ENCODE measurements at regions of chr19 and their contacts with region 1.

Region 1: GRCh38 chr19:19591133-19591825 is 27.2 kb downstream of the PBX4 start:
- DNase-seq: peak; percentile 67
- ATAC-seq: peak; percentile 62
- H3K4me3 Mint-ChIP-seq: peak overlapping the region; percentile 52
- H3K27ac Mint-ChIP-seq: peak overlapping the region; percentile 79
- H3K4me1 Mint-ChIP-seq: peaks cover 74% of the 10 kb centered on the region
- H3K27me3 Mint-ChIP-seq: no peaks in the 10 kb centered on the region

Region 2: DNA sequence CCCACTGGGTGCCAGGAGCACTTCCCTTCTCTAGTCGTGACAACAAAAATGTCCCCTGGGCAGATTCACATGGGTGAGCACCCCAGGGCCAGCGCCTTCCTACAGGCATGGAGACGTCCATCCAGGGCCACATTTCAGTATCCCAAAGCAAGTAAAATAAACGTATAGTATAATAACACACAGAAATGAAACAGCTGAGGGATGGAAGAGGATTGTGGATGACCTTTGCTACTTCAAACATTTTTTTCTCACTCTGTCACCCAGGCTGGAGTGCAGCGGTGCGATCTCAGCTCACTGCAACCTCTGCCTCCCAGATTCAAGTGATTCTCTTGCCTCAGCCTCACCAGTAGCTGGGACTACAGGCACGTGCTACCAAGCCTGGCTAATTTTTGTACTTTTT is 25.0 kb before region 1 on chr19:
- CTCF ChIA-PET with region 1: no interaction called
- POLR2A ChIA-PET with region 1: no interaction called
- DNase-seq: no peak
- ATAC-seq: no peak
- H3K4me3 Mint-ChIP-seq: no peak overlapping the region
- H3K27ac Mint-ChIP-seq: no peak overlapping the region
- H3K4me1 Mint-ChIP-seq: peaks cover 10% of the 10 kb centered on the region
- H3K27me3 Mint-ChIP-seq: no peaks in the 10 kb centered on the region

Region 3: DNA sequence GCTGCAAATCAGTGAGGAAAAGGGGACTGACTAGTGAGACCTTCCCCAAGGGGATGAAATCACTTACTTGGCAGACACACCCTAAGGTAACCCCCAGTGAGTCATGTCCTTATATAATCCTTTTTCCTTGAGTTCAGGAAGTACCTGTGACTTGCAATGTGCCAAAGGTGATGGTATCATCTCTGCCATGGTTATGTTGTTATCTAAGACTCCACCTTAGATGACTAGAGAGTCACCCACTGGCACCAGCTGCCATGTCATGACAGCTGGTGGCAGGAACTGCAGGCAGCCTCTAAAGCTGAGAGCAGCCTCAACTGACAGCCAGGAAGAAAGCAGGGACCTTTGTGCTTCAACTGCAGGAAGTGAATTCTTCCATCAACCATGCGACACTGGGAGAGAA is 14.7 kb after region 1 on chr19:
- CTCF ChIA-PET with region 1: interaction called, 8 read pairs
- POLR2A ChIA-PET with region 1: interaction called, 12 read pairs
- DNase-seq: peak; percentile 59
- ATAC-seq: peak; percentile 65
- H3K4me3 Mint-ChIP-seq: peak overlapping the region; percentile 32
- H3K27ac Mint-ChIP-seq: peak overlapping the region; percentile 89
- H3K4me1 Mint-ChIP-seq: peaks cover 68% of the 10 kb centered on the region
- H3K27me3 Mint-ChIP-seq: no peaks in the 10 kb centered on the region

Measured in activated CD8-positive, alpha-beta T cell treated with anti-CD3 and anti-CD28 coated beads, Interleukin-2, amount 10 ng/mL, durations not matched to agents 7 days and 5 days (primary cell).